Activated B cell treated with CpG ODN at 0.5 μM for 24 hours (primary cell): ENCODE measurements at regions of chr1 and their contacts with region 1.

Region 1: GRCh38 chr1:45303582-45304310 is 22.9 kb upstream of the HPDL start:
- DNase-seq: peak; percentile 91
- ATAC-seq: peak; percentile 80
- H3K4me3 Mint-ChIP-seq: peak overlapping the region; percentile 92
- H3K27ac Mint-ChIP-seq: peak overlapping the region; percentile 96
- H3K4me1 Mint-ChIP-seq: peaks cover 43% of the 10 kb centered on the region
- H3K27me3 Mint-ChIP-seq: no peaks in the 10 kb centered on the region
- CTCF ChIP-seq: no peak

Region 2: GRCh38 chr1:44775078-44775929 is 528.4 kb before region 1 on chr1 and contains the start of gene RPS8:
- CTCF ChIA-PET with region 1: no interaction called
- POLR2A ChIA-PET with region 1: interaction called, 21 read pairs
- intact Hi-C with region 1: no loop called
- DNase-seq: peak; percentile 84
- ATAC-seq: peak; percentile 82
- H3K4me3 Mint-ChIP-seq: peak within 1 kb of the TSS; percentile 98
- H3K27ac Mint-ChIP-seq: peak within 1 kb of the TSS; percentile 99
- H3K4me1 Mint-ChIP-seq: peaks cover 40% of the 10 kb centered on the region
- H3K27me3 Mint-ChIP-seq: no peaks in the 10 kb centered on the region
- CTCF ChIP-seq: no peak
- total RNA-seq, gene RPS8: 3,767 and 4,240 TPM in 2 replicates

Region 3: DNA sequence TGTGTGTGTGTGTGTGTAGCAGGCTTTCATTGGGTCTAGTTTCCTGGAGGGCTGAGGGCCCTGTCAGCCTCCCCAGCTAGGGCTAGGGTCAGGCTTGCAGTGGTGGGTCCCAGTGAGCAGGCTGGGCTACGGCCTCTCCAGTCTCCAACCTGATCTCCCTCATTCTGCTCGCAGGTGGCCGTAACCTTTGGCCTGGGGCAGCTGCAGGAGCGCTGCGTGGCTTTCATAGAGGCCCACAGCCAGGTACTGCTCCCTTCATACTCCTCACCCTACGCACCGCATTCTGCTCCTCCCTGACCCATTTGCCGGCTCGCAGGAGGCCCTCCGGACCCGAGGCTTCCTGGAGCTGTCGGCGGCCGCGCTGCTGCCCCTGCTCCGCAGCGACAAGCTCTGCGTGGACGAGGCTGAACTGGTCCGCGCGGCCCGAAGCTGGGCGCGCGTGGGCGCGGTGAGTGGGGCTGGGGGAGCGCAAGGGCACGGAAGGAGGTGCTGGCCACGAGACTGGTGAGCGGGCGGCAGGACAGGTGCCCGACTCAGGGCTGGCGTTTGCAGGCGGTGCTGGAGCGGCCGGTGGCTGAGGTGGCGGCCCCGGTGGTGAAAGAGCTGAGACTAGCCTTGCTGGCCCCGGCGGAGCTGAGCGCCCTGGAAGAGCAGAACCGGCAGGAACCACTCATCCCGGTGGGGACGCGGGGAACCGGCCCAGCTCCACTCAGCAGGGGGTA is 490.8 kb before region 1 on chr1:
- CTCF ChIA-PET with region 1: no interaction called
- POLR2A ChIA-PET with region 1: interaction called, 27 read pairs
- intact Hi-C with region 1: no loop called
- DNase-seq: no peak
- ATAC-seq: no peak
- H3K4me3 Mint-ChIP-seq: peak overlapping the region; percentile 11
- H3K27ac Mint-ChIP-seq: peak overlapping the region; percentile 50
- H3K4me1 Mint-ChIP-seq: peaks cover 63% of the 10 kb centered on the region
- H3K27me3 Mint-ChIP-seq: no peaks in the 10 kb centered on the region
- CTCF ChIP-seq: no peak

Region 4: DNA sequence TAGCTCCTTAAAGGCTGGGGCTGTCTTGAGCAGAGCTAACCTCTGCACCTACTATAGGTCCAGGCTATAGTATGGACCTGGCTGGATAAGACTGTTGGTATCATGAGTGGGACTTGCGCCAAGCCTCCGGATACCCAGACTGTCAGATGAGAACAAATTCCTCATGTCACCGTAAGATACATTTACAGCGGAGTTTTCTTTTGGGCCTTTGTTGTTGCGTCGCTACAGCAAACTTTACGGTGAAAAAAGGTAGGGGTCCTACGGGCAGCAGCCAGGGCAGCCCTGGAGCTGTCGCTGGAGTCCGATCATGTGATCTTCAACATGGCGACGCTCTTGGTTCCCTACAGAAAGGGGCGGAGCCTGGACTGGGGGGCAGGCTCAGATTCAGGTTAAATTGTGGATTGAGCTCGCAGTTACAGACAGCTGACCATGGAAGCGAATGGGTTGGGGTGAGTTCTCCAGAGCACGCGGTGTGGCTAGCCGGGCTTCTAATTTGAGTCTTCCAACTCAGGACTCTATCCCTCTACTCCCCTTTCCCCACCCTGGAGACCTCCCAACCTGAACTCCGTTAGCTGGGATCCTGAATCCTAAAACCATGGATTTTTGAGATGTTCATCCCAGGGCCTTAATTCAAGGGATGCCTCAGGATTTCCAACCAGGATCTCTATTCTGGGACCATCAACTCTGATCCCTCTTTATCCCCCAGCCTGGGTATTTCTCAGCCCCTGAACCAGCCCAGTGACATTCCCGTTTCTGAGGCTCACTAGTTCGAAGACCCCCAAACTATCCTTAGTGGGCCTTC is 291.7 kb before region 1 on chr1 and contains the start of gene UROD:
- CTCF ChIA-PET with region 1: interaction called, 227 read pairs
- POLR2A ChIA-PET with region 1: interaction called, 156 read pairs
- intact Hi-C with region 1: loop called (anchors 1 kb)
- DNase-seq: peak; percentile 69
- ATAC-seq: peak; percentile 84
- H3K4me3 Mint-ChIP-seq: peak within 1 kb of the TSS; percentile 83
- H3K27ac Mint-ChIP-seq: peak within 1 kb of the TSS; percentile 81
- H3K4me1 Mint-ChIP-seq: peaks cover 43% of the 10 kb centered on the region
- H3K27me3 Mint-ChIP-seq: no peaks in the 10 kb centered on the region
- CTCF ChIP-seq: no peak
- total RNA-seq, gene UROD: 60.3 and 64.9 TPM in 2 replicates

Region 5: GRCh38 chr1:45339789-45340570 is 36.2 kb after region 1 on chr1 and contains the starts of genes MUTYH and TOE1:
- CTCF ChIA-PET with region 1: interaction called, 12 read pairs
- POLR2A ChIA-PET with region 1: interaction called, 217 read pairs
- intact Hi-C with region 1: loop called (anchors 1 kb)
- DNase-seq: peak; percentile 85
- ATAC-seq: peak; percentile 86
- H3K4me3 Mint-ChIP-seq: peak within 1 kb of the TSS; percentile 100
- H3K27ac Mint-ChIP-seq: peak within 1 kb of the TSS; percentile 99
- H3K4me1 Mint-ChIP-seq: peaks cover 39% of the 10 kb centered on the region
- H3K27me3 Mint-ChIP-seq: no peaks in the 10 kb centered on the region
- CTCF ChIP-seq: no peak
- total RNA-seq, gene MUTYH: 61.0 and 63.0 TPM in 2 replicates
- total RNA-seq, gene TOE1: 24.6 and 25.3 TPM in 2 replicates

Region 6: DNA sequence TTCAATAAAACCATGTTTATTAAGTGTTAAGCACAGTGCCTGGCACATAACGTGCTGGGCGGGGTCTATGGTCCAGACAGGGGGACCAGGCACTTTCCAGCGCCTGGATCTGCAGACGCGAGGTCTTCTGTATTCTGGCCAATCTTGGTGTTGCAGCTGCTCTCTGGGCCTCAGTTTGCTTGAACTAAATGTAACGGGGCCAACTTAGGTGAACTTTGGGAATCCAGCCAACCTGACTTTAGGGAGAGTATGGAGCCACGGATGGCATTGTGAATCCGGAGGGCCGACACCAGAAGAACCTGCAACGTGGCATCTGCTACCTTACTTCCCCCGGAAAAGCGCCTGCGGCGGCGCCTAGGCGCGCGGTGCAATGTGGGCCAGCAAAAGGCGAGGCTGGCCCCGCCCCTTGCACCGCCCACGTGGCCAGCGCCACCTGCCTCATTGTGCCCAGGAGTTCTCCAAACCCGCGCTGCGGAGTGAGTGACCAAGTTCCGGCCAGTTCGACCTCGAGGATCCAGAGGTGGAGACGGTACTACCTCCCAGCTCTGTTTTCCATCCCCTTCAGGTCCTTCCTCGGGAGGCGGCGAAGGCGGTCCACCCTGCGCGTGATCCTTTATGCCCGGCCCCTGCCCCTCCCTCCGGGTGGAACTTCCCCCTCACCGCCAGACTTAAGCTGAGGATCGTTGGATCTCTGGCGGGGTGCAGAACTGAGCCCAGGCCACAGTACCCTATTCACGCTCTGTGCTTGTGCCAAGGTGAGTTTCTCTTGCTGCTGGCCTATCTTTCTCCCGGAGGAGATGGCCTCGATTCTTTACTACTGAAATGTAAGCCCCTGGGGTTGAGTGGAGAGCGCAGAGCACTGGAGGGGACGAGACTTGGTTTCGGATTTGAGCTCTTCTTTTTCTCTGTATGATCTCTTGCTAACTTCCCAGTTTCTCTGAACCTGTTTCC is 246.9 kb after region 1 on chr1 and contains the start of gene AKR1A1:
- CTCF ChIA-PET with region 1: no interaction called
- POLR2A ChIA-PET with region 1: interaction called, 3 read pairs
- intact Hi-C with region 1: loop called (anchors 1 kb)
- DNase-seq: peak; percentile 91
- ATAC-seq: peak; percentile 91
- H3K4me3 Mint-ChIP-seq: peak within 1 kb of the TSS; percentile 99
- H3K27ac Mint-ChIP-seq: peak within 1 kb of the TSS; percentile 95
- H3K4me1 Mint-ChIP-seq: peaks cover 35% of the 10 kb centered on the region
- H3K27me3 Mint-ChIP-seq: no peaks in the 10 kb centered on the region
- CTCF ChIP-seq: no peak
- total RNA-seq, gene AKR1A1: 215 and 218 TPM in 2 replicates